Activated B cell treated with CpG ODN at 0.5 μM for 24 hours (primary cell): ENCODE measurements at regions of chr17 and their contacts with region 1.

Region 1: DNA sequence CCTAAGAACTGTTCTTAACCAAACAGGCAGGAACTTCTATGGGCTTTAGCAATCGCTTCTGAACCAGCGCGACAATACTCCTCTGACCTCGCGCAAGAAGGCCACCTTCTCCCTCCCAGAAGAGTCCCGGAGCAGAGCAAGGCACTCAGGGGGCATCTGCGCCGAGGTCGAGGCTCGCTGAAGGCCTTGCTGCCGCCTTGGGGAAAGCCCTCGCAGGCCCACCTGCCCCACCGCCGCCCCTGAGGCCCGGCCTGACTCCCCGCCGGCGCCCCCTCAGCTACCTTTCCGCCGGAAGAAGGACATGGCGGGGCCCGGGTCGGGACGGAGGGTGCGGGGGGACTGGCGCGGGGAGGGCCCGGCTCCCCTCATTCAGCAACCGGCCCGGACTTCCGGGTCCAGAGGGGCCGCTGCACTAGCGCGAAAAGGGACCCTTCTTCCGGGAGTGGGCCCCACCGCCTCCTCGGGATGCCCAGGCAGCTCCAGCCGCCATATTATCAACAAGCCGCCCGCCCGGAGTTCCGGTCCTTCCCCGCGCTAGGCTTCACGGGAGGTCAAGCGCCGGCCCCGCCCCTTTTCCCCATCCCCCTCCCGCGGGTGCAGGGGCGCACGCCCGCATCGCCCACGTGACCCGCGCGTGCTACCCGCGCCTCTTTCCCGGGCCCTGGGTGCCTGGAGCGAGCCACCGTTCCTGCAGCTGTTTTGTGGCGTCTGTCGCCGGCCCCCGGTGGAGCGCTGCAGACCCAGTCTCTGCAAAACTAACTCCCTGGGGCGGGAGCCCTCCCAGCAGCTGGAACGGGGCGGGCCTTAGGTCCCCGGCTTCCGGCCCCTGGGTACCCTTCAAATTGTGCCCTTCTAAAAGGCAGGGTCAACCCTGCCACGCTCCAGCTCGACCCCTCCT is at the start of gene AKAP10:
- DNase-seq: peak; percentile 96
- ATAC-seq: peak; percentile 87
- H3K4me3 Mint-ChIP-seq: peak within 1 kb of the TSS; percentile 99
- H3K27ac Mint-ChIP-seq: peak within 1 kb of the TSS; percentile 99
- H3K4me1 Mint-ChIP-seq: peaks cover 44% of the 10 kb centered on the region
- H3K27me3 Mint-ChIP-seq: no peaks in the 10 kb centered on the region
- CTCF ChIP-seq: no peak
- total RNA-seq, gene AKAP10: 38.7 and 51.5 TPM in 2 replicates

Region 2: DNA sequence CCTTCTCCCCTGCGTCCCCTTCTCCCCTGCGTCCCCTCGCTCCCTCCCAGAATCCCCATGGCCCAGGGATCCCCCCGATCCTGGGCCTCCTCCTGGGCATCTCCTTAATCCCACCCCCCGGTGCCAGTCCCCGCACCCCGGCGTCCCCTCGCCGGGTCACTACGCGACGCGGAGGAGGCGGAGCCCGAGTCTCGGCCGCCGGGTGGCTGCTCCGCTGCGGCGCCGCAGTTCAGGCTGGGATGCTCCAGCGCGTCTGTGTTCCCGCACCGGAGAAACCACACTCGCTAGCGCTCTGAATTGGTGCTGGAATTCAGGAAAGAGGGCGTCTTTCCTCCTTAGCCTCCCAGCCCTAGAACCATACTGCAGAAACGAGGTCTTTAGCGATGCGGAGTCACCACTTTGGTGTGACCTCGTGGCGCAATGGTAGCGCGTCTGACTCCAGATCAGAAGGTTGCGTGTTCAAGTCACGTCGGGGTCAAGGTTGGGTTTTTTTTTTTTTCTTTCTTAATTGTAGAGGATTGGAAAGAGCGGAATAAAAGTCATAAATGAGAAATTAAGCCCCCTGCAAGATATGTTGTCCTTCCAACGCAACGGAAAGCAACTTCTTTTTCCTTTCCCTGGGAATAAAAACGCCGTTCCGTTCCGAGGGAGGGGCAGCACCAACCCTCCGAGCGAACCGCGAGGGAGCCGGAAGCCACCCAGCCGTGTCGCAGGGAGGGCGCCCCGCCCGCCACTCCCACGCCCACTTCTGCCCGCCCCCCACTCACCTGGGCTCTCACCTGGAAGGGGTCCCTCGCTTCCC is 469.6 kb before region 1 on chr17:
- CTCF ChIA-PET with region 1: no interaction called
- POLR2A ChIA-PET with region 1: no interaction called
- intact Hi-C with region 1: loop called (anchors 5 kb)
- DNase-seq: peak; percentile 83
- ATAC-seq: peak; percentile 80
- H3K4me3 Mint-ChIP-seq: peak overlapping the region; percentile 92
- H3K27ac Mint-ChIP-seq: peak overlapping the region; percentile 94
- H3K4me1 Mint-ChIP-seq: peaks cover 11% of the 10 kb centered on the region
- H3K27me3 Mint-ChIP-seq: peaks cover 2% of the 10 kb centered on the region
- CTCF ChIP-seq: no peak

Region 3: DNA sequence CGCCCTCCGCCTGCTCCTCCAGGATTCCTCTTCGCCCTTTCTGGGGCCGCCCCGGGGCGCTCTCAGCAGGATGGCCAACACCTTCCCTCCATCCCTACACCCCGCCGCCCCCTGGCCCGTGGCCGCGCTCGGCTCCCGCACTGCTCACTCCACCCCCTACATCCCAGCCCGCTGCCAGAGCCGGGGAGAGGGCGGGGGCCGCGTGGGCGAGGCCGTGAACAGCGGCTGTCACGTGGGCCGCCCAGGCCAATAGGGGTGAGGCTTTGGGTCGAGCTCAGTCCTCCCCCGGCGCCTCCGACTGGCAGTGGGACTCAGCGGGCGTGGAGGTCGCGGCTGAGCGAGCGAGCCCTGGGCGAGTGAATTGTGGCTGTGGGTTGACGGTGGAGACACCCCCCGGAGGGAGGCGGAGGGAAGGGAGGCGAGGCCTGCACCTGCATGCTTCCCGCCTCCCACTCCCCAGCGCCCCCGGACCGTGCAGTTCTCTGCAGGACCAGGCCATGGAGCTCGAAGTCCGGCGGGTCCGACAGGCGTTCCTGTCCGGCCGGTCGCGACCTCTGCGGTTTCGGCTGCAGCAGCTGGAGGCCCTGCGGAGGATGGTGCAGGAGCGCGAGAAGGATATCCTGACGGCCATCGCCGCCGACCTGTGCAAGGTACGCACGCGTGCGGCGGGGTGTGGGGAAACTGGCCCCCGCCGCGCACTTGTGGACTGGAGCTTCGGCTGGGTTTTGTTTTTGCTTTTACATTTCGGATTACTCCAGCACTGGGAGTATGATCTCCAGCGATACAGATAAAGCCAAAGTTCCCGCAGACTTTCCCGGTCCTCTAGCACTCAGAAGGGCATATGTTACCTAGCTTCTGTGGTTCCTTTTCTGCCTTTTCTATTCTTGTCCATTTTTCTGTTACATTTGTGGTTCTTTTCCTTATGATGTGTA is 328.8 kb before region 1 on chr17 and contains the start of gene ALDH3A2:
- CTCF ChIA-PET with region 1: no interaction called
- POLR2A ChIA-PET with region 1: interaction called, 4 read pairs
- intact Hi-C with region 1: loop called (anchors 2 kb)
- DNase-seq: peak; percentile 91
- ATAC-seq: peak; percentile 95
- H3K4me3 Mint-ChIP-seq: peak within 1 kb of the TSS; percentile 93
- H3K27ac Mint-ChIP-seq: peak within 1 kb of the TSS; percentile 95
- H3K4me1 Mint-ChIP-seq: peaks cover 35% of the 10 kb centered on the region
- H3K27me3 Mint-ChIP-seq: peaks cover 2% of the 10 kb centered on the region
- CTCF ChIP-seq: no peak
- total RNA-seq, gene ALDH3A2: 18.3 and 19.3 TPM in 2 replicates

Region 4: GRCh38 chr17:19928299-19928698 is 49.3 kb before region 1 on chr17:
- CTCF ChIA-PET with region 1: no interaction called
- POLR2A ChIA-PET with region 1: no interaction called
- intact Hi-C with region 1: no loop called
- DNase-seq: no peak
- ATAC-seq: no peak
- H3K4me3 Mint-ChIP-seq: no peak overlapping the region
- H3K27ac Mint-ChIP-seq: no peak overlapping the region
- H3K4me1 Mint-ChIP-seq: no peaks in the 10 kb centered on the region
- H3K27me3 Mint-ChIP-seq: no peaks in the 10 kb centered on the region
- CTCF ChIP-seq: no peak

Region 5: DNA sequence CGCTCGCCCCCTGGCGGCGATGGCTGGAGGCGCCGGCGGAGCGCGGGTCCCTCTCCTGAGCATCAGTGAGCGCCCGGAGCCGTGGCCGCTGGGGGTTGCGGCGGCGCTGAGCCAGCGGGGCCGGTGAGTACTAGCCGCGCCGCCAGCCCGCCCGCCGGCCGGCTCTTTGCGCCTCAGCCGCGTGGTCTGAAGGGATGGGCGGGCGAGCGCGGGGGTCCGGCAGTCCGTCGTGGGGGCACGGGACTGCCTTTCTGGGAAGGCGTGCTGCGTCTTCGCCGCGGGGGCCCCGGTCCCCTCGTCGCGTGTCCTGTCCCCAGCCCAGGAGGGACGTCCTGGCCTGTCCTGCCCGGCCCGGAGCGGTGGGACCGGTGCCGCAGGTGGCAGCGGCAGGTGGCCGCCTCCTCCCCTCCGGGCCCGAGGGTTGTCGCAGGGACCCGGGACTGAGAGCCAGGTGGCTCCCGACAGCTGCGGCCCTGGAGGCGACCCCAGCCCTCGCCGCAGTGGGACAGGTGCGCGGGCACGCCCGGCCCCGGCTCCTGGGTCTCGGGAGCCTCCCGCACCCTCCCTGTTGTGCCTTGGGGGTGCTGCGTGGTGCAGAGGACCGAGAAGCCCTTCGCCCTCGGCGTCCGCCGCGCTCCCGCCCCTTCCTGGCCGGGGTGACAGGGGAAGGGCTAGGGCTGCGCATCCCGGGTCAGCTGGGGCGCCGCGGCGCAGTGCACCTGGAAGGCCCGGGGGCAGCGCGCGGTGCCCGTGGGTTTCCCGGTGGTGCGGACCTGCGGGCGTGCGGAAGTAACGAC is 31.9 kb after region 1 on chr17 and contains the start of gene SPECC1:
- CTCF ChIA-PET with region 1: interaction called, 3 read pairs
- POLR2A ChIA-PET with region 1: interaction called, 16 read pairs
- intact Hi-C with region 1: loop called (anchors 1 kb)
- DNase-seq: peak; percentile 96
- ATAC-seq: peak; percentile 99
- H3K4me3 Mint-ChIP-seq: peak within 1 kb of the TSS; percentile 87
- H3K27ac Mint-ChIP-seq: no peak within 1 kb of the TSS
- H3K4me1 Mint-ChIP-seq: peaks cover 13% of the 10 kb centered on the region
- H3K27me3 Mint-ChIP-seq: peaks cover 38% of the 10 kb centered on the region
- CTCF ChIP-seq: peak; percentile 94
- total RNA-seq, gene SPECC1: 7.5 and 11.5 TPM in 2 replicates

Region 6: DNA sequence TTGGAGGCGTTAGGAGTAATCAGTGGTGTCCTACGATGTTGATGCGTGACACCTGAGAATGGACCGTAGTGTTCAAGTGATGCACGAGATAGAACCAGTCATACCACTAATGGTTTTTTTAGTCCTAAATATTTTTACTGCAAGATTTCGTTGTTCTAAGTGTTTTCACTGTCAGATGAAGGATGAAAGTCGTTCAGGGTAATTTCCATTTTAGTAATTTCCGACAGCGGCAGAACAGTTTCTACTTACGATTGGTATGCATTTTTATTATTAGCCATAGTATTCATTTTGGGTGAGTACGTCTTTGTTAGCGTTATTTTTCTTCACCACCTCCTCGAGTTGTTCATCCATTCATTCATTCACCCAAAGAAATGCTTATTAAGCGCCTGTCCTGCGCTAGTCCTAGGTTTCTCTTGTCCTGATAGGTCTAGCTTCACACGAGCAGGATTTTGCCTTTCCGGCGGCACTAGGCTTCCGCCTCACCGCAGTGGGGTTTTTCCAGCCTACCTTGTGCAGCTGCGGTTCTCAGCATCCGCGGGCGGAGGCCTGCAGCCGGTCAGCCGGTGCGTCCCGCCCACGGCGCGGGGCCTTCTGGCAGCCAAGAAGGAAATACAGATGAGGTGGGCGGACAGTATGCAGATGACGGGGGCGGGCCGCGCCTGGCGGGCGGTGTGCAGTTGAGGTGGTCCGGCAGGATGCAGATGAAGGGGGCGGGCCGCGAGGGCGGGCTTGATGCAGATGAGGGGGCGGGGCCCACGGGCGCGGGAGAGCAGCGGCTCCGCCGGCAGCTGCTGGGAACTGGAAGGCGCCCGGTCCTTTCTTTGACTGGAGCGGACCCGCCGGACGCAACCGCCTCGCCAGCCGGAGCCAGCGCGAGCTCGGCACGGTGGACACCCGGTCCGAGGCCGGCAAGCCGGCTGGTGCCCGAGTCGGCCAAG is 178.0 kb after region 1 on chr17:
- CTCF ChIA-PET with region 1: no interaction called
- POLR2A ChIA-PET with region 1: interaction called, 17 read pairs
- intact Hi-C with region 1: loop called (anchors 1 kb)
- DNase-seq: peak; percentile 99
- ATAC-seq: peak; percentile 93
- H3K4me3 Mint-ChIP-seq: no peak overlapping the region
- H3K27ac Mint-ChIP-seq: no peak overlapping the region
- H3K4me1 Mint-ChIP-seq: peaks cover 6% of the 10 kb centered on the region
- H3K27me3 Mint-ChIP-seq: no peaks in the 10 kb centered on the region
- CTCF ChIP-seq: no peak

Region 7: DNA sequence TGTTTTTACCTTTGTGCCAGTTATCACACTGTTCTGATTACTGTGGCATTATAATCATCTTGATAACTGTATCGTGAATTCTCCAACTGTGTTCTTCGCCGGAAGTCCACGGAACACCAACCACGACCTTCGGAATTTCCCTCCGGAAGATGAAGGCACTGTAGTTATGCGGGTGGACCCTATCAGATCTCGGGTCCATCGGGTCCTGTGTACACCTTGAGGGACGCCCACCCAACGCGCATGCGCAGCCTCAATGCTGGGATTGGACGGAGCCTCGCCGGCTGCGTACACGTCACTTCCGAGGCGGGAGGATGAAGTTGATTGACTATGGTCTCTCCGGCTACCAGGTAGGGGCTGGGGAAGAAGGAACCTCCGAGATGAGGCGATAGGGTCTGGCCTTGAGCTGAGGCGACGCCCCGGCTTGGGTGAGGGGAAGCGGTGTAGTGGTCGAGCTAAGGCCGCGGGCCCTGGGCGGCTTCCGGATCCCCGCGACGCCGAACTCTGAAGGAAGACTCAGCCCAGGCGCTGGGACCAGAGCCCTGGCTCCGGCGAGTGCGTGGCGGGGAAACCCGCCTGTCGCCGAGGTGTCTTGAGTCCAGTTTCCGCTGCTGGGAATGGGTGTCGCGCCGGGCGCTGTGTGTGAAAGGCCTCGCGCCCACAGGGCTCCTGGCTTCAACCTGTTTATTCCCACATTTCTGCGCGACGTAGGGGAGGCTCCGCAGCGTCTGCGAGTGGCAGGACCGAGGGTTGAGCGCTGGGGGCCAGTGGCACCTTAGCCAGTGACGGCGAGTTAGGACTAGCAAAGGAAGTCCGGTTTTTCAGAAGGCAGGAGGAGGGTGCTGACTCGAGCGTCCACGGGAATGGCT is 1149.3 kb after region 1 on chr17 and contains the start of gene DHRS7B:
- CTCF ChIA-PET with region 1: no interaction called
- POLR2A ChIA-PET with region 1: no interaction called
- intact Hi-C with region 1: loop called (anchors 5 kb)
- DNase-seq: peak; percentile 95
- ATAC-seq: peak; percentile 90
- H3K4me3 Mint-ChIP-seq: peak within 1 kb of the TSS; percentile 94
- H3K27ac Mint-ChIP-seq: peak within 1 kb of the TSS; percentile 91
- H3K4me1 Mint-ChIP-seq: peaks cover 35% of the 10 kb centered on the region
- H3K27me3 Mint-ChIP-seq: peaks cover 3% of the 10 kb centered on the region
- CTCF ChIP-seq: no peak
- total RNA-seq, gene DHRS7B: 11.8 and 12.1 TPM in 2 replicates